WTC11 (cell line): ENCODE measurements at regions of chr2 and their contacts with region 1.

Region 1: DNA sequence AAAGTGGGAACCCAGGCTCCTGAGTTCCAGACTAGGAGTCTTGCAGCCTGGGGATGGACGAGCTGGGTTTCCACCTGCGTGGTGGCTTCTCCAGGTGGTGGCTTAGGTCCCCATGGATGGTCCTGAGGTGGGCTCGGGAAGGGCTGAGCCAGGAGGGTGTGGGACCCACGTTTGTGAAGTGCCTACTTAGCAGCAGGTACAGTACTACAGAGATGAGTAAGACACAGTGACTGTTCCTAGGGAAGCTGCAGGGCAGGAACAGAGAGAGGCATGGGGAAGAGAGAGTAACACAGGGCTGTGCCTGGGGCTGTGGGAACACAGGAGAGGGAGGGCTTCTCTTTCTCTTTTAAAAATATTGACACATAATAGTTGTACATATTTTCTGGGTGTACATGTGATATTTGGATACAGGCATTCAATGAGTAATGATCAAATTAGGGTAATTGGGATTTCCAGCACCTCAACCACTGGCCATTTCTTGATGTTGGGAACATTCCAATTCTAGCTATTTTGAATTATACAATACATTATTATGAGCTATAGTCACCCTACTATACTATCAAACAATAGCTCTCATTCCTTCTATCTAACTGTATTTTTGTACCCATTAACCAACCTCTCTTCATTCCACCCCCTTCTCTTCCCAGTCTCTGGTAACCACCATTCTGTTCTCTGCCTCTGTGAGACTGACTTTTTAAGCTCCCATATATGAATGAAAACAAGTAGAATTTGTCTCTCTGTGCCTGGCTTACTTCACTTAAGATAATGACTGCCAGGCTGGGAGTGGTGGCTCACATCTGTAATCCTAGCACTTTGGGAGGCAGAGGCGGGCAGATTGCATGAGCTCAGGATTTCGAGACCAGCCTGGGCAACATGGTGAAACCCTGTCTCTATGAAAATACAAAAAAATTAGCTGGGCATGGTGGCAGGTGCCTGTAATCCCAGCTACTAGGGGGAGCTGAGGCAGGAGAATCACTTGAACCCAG is 15.0 kb downstream of the TOGARAM2 start:
- DNase-seq: no peak
- ATAC-seq: no peak
- H3K4me3 Mint-ChIP-seq: no peak overlapping the region
- H3K27ac Mint-ChIP-seq: no peak overlapping the region
- H3K4me1 Mint-ChIP-seq: peaks cover 8% of the 10 kb centered on the region
- H3K27me3 Mint-ChIP-seq: no peaks in the 10 kb centered on the region
- CTCF ChIP-seq: no peak

Region 2: GRCh38 chr2:28981016-28981441 is 15.0 kb before region 1 on chr2 and contains the start of gene TOGARAM2:
- CTCF ChIA-PET with region 1: no interaction called
- POLR2A ChIA-PET with region 1: no interaction called
- DNase-seq: no peak
- ATAC-seq: no peak
- H3K4me3 Mint-ChIP-seq: no peak within 1 kb of the TSS
- H3K27ac Mint-ChIP-seq: no peak within 1 kb of the TSS
- H3K4me1 Mint-ChIP-seq: no peaks in the 10 kb centered on the region
- H3K27me3 Mint-ChIP-seq: no peaks in the 10 kb centered on the region
- CTCF ChIP-seq: no peak
- total RNA-seq, gene TOGARAM2: 0.62 to 1.0 TPM (median 1.0 TPM) in 3 replicates

Region 3: GRCh38 chr2:29100564-29100963 is 104.5 kb after region 1 on chr2:
- CTCF ChIA-PET with region 1: no interaction called
- POLR2A ChIA-PET with region 1: interaction called, 14 read pairs
- DNase-seq: no peak
- ATAC-seq: no peak
- H3K4me3 Mint-ChIP-seq: no peak overlapping the region
- H3K27ac Mint-ChIP-seq: no peak overlapping the region
- H3K4me1 Mint-ChIP-seq: no peaks in the 10 kb centered on the region
- H3K27me3 Mint-ChIP-seq: no peaks in the 10 kb centered on the region
- CTCF ChIP-seq: no peak